ENCODE measurements at regions of chr18 and their contacts with region 1.

Region 1: DNA sequence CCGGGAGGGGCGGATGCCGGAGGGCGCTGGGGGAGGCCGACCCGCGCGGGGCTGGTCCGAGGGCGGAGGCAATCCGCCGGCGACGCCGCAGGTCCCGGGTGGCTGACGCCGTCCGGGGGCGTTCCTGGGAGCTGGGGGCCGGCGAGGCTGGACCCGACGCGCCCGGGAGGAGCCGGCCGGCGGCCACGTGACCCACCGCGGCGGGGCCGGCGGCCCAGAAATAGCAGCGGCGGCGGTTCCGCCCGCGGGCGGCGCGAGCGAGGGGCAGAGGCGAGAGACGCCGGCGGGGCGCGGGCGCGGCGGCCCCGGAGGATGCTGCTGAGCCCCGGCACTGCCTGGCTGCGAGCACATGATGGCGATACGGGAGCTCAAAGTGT is at the start of gene RAB31:
- DNase-seq: peak; percentile 71
- ATAC-seq: peak; percentile 57
- H3K4me3 ChIP-seq: peak within 1 kb of the TSS; percentile 63 to 83 (median 72)
- H3K4me3 Mint-ChIP-seq: peak within 1 kb of the TSS; percentile 97
- H3K27ac ChIP-seq: peak within 1 kb of the TSS; percentile 76
- H3K27ac Mint-ChIP-seq: peak within 1 kb of the TSS; percentile 95
- H3K4me1 ChIP-seq: peaks cover 39 to 48% of the 10 kb centered on the region in 2 donors
- H3K4me1 Mint-ChIP-seq: peaks cover 49% of the 10 kb centered on the region
- H3K27me3 ChIP-seq: peaks cover 0 to 22% (median 0%) of the 10 kb centered on the region in 4 experiments
- H3K27me3 Mint-ChIP-seq: no peaks in the 10 kb centered on the region
- CTCF ChIP-seq: no peak
- total RNA-seq, gene RAB31: 38.5 and 44.6 TPM in 2 replicates

Region 2: DNA sequence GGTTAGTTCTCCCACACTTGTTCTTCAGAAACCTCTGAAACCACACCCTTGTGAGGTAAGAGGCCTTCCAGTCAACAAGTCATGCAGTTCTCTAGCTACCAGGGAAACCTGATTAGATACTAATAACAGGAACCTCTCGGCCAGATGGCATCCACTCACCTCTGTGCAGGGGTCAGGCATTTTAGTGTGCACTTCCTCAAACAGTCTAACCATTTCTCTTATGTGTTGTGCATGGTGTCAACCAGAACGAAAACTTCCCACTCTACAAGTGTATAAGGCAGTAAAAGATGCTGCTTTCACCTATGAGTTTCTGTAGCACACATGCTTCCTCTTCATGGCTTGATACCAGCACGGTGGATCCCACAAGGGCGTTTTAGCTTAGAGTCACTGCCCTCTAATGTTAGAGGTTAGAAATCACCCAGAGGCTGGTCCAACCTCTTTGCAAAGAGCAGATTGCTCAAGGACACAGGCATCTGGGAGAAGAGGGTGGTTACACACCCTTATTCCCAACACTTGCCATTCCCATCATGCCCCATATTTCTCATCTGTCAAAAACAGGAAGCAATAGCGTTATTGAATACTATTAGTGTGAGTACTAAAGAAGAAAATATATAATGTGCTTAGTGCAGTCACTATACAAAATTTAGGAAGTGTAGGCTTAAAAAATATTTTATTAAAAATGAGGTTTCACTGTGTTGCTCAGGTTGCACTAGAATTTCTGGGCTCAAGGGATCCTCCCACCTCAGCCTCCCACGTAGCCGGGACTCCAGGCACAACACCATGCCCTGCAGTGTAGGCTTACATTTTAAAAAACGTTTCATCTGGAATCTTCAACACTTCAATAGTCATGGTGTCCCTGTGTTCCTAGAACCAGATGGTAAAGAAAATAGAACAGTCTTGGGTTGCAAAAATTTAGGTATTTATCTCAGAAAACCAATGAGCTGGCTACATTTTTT is 34.5 kb before region 1 on chr18:
- CTCF ChIA-PET with region 1: interaction called, 9 read pairs
- POLR2A ChIA-PET with region 1: no interaction called
- intact Hi-C with region 1: loop called (anchors 1 kb)
- DNase-seq: peak; percentile 95
- ATAC-seq: peak; percentile 95
- H3K4me3 ChIP-seq: no peak overlapping the region
- H3K4me3 Mint-ChIP-seq: peak overlapping the region; percentile 40
- H3K27ac ChIP-seq: peak overlapping the region; percentile 65 to 78
- H3K27ac Mint-ChIP-seq: peak overlapping the region; percentile 90
- H3K4me1 ChIP-seq: peaks cover 12 to 15% of the 10 kb centered on the region in 2 donors
- H3K4me1 Mint-ChIP-seq: peaks cover 10% of the 10 kb centered on the region
- H3K27me3 ChIP-seq: no peaks in the 10 kb centered on the region
- H3K27me3 Mint-ChIP-seq: no peaks in the 10 kb centered on the region
- CTCF ChIP-seq: peak; percentile 65

Region 3: GRCh38 chr18:9771261-9771976 is 63.4 kb after region 1 on chr18:
- CTCF ChIA-PET with region 1: no interaction called
- POLR2A ChIA-PET with region 1: no interaction called
- intact Hi-C with region 1: loop called (anchors 5 kb)
- DNase-seq: peak; percentile 72
- ATAC-seq: peak; percentile 92
- H3K4me3 ChIP-seq: no peak overlapping the region
- H3K4me3 Mint-ChIP-seq: peak overlapping the region; percentile 47
- H3K27ac ChIP-seq: no peak overlapping the region
- H3K27ac Mint-ChIP-seq: no peak overlapping the region
- H3K4me1 ChIP-seq: peaks cover 0 to 13% of the 10 kb centered on the region in 2 donors
- H3K4me1 Mint-ChIP-seq: peaks cover 26% of the 10 kb centered on the region
- H3K27me3 ChIP-seq: no peaks in the 10 kb centered on the region
- H3K27me3 Mint-ChIP-seq: no peaks in the 10 kb centered on the region
- CTCF ChIP-seq: peak; percentile 98

Region 4: GRCh38 chr18:10525371-10526210 is 817.5 kb after region 1 on chr18 and contains the start of gene NAPG:
- CTCF ChIA-PET with region 1: no interaction called
- POLR2A ChIA-PET with region 1: no interaction called
- intact Hi-C with region 1: loop called (anchors 10 kb)
- DNase-seq: peak; percentile 96
- ATAC-seq: peak; percentile 90
- H3K4me3 ChIP-seq: peak within 1 kb of the TSS; percentile 79 to 94 (median 88)
- H3K4me3 Mint-ChIP-seq: peak within 1 kb of the TSS; percentile 99
- H3K27ac ChIP-seq: peak within 1 kb of the TSS; percentile 77 to 80
- H3K27ac Mint-ChIP-seq: peak within 1 kb of the TSS; percentile 96
- H3K4me1 ChIP-seq: peaks cover 20 to 39% of the 10 kb centered on the region in 2 donors
- H3K4me1 Mint-ChIP-seq: peaks cover 51% of the 10 kb centered on the region
- H3K27me3 ChIP-seq: no peaks in the 10 kb centered on the region
- H3K27me3 Mint-ChIP-seq: no peaks in the 10 kb centered on the region
- CTCF ChIP-seq: no peak
- total RNA-seq, gene NAPG: 31.8 and 38.7 TPM in 2 replicates

Measured in B cell (primary cell).